Dendritic cell treated with granulocyte-macrophage colony-stimulating factor and Interleukin-4, amounts not matched to agents 40 ng/mL and 50 ng/mL, for 4 days (primary cell): ENCODE measurements at regions of chr22 and their contacts with region 1.

Region 1: DNA sequence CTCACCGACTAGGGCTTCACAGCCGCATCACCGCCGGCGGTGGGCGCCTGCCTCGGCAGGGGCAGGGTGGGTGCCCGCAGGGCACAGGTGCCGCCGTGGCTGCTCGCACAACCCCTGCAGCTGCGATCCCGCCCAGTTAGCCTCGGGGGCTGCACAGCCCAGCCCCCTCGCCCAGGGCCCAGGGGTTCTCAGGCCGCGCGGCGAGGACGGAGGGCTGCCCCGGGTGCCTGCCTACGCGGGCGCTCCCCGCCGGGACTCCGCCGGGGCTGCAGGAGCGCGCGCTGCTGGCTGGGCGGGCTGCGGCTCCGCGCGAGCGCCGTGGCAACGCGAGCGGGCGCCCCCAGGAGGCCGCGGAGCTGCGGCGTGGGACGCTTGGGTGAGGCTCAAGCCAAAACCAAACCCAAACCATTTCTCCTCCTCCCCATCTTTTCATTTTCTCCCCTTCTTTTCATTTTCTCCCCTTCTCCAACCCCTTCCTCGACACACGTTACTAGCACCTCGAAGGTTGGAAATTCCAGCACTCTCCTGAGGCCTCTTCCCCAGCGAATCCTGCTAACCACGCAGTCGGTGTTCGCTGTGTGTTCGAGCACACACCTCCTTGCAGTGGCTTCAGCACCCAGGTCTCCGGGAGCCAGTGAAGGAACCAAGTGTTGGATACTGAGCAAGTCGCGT is at the start of gene MICAL3:
- H3K4me3 Mint-ChIP-seq: peak within 1 kb of the TSS; percentile 62
- H3K27ac Mint-ChIP-seq: no peak within 1 kb of the TSS
- H3K4me1 Mint-ChIP-seq: peaks cover 12% of the 10 kb centered on the region
- H3K27me3 Mint-ChIP-seq: peaks cover 58% of the 10 kb centered on the region

Region 2: DNA sequence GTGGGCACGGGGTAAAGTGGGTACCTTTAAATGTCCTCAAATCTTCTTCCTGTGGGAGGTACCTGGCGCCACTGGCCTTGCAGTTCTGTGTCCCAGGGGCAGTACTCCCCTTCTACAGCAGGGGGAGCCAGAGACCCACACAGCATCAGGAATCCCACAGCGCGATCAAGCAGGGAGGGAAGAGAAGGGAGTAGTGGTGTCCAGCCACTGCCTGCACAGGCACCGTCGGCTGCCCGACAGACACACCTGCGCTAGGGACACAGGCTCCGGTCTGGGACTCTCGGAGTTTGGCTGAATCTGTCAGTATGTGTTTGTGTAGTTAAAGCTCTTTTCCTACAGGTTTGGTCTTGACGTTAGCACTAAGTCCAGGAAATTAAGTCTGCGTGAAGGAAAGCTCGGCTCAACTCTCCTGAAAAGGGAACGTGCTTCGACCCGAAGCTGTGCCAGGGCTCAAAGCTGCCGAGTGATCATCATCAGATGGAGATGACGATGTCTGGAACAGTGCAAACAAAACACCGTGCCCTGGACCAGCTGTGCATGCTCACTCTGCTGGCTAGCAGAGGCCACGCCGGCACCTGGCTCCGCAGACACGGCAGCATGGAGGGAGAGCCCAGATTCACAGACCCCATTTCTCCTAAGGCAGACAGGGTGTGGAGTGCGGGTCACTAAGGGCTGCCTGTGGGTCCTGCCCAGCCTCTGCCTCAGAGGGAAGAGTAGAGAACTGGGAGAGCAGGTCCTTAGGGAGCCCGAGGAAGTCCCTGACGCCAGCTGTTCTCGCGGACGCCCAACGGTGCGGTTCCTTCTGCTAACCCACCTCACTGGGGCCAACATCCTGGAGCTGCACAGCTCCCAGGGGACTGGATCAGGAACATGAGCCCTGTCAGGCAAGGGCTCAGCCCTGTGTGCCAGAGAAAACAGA is 194.1 kb before region 1 on chr22:
- intact Hi-C with region 1: loop called (anchors 2 kb)
- H3K4me3 Mint-ChIP-seq: no peak overlapping the region
- H3K27ac Mint-ChIP-seq: no peak overlapping the region
- H3K4me1 Mint-ChIP-seq: peaks cover 5% of the 10 kb centered on the region
- H3K27me3 Mint-ChIP-seq: no peaks in the 10 kb centered on the region